ENCODE measurements at regions of chr4 and their contacts with region 1.

Region 1: GRCh38 chr4:5050520-5051277 is 581 bp upstream of the STK32B start:
- DNase-seq: peak in 2 of 9 experiments; percentile 13 to 38
- ATAC-seq: no peak
- H3K4me3 ChIP-seq: peak overlapping the region; percentile 39 to 48
- H3K4me3 Mint-ChIP-seq: peak overlapping the region; percentile 79
- H3K27ac ChIP-seq: no peak overlapping the region
- H3K27ac Mint-ChIP-seq: no peak overlapping the region
- H3K4me1 ChIP-seq: peaks cover 9% of the 10 kb centered on the region
- H3K4me1 Mint-ChIP-seq: peaks cover 17% of the 10 kb centered on the region
- H3K27me3 ChIP-seq: peaks cover 0 to 10% of the 10 kb centered on the region in 2 experiments
- H3K27me3 Mint-ChIP-seq: peaks cover 52% of the 10 kb centered on the region
- CTCF ChIP-seq: no peak

Region 2: DNA sequence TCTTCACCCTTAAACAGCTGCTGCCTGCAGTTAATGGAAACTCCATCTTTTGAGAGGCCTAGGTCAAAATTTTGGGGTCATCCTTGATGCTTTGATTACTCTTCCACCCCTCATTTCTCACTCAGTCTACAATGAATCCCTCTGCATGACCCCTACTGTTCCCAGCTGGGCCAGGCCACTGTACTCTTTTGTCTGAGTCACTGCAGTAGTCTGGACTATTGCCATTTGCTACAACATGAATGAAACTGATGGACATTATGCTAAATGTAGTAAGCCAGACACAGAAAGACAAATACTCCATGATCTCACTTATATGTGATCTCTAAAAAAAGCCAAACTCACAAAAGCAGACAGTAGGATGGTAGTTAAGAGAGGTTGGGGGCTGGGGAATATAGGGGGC is 28.9 kb after region 1 on chr4:
- CTCF ChIA-PET with region 1: no interaction called
- POLR2A ChIA-PET with region 1: no interaction called
- intact Hi-C with region 1: no loop called
- DNase-seq: no peak
- ATAC-seq: no peak
- H3K4me3 ChIP-seq: no peak overlapping the region
- H3K4me3 Mint-ChIP-seq: no peak overlapping the region
- H3K27ac ChIP-seq: no peak overlapping the region
- H3K27ac Mint-ChIP-seq: no peak overlapping the region
- H3K4me1 ChIP-seq: no peaks in the 10 kb centered on the region
- H3K4me1 Mint-ChIP-seq: no peaks in the 10 kb centered on the region
- H3K27me3 ChIP-seq: no peaks in the 10 kb centered on the region
- H3K27me3 Mint-ChIP-seq: peaks cover 5% of the 10 kb centered on the region
- CTCF ChIP-seq: no peak

Region 3: DNA sequence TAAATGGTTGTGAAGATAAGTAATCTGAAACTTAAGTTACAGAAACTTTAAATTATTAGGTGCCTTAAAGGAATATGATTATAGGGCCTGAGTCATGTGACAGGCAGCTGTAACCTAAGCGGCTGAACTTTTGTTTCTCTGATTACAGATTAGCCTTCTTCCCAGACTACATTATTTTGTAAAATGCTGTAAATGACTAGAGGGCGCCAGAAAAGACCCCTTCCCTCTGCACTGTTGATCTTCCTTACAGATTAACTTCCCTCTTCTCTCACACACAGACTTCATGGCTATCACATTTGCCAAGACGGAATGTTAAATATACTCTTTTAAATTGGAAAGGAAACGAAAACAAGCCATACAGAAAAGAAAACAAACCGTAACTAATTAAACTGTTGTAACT is 561.1 kb after region 1 on chr4:
- CTCF ChIA-PET with region 1: no interaction called
- POLR2A ChIA-PET with region 1: no interaction called
- intact Hi-C with region 1: no loop called
- DNase-seq: no peak
- ATAC-seq: no peak
- H3K4me3 ChIP-seq: no peak overlapping the region
- H3K4me3 Mint-ChIP-seq: no peak overlapping the region
- H3K27ac ChIP-seq: no peak overlapping the region
- H3K27ac Mint-ChIP-seq: no peak overlapping the region
- H3K4me1 ChIP-seq: no peaks in the 10 kb centered on the region
- H3K4me1 Mint-ChIP-seq: no peaks in the 10 kb centered on the region
- H3K27me3 ChIP-seq: no peaks in the 10 kb centered on the region
- H3K27me3 Mint-ChIP-seq: no peaks in the 10 kb centered on the region
- CTCF ChIP-seq: no peak

Region 4: DNA sequence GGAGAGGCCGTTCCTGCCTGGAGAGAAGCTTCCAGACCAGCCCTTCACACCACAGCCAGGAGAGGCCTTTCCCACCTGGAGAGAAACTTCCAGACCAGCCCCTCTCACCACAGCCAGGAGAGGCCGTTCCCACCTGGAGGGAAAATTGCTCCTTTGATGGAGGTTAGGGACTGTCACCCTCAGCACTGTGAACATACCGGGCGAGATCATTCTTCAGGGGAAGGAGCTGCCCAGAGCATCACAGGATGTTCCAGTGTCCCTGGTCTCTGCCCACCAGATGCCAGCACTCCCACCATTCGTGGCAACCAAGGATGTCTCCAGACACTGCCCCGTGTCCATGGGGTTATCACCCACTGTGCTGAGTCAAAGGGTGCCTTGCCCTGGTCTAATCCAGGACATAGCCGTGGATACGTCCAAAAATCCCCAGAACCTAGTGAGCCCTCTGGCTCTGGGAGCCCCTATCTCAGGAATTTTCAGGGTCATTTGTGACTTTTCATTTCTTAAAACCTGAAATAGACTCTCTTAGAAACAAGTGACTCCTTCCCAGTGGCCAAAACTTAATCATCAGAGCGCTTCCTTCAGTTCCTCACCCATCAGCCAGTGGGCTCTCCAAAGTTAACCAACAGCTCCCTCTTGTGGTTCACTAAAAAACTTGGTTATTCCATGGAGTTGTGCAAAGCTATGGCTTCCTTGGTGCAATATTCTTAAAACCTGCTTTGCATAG is 762.0 kb after region 1 on chr4:
- CTCF ChIA-PET with region 1: no interaction called
- POLR2A ChIA-PET with region 1: no interaction called
- intact Hi-C with region 1: loop called in 1 of 2 experiments (anchors 2 kb)
- DNase-seq: peak in 2 of 9 experiments; percentile 35 to 55
- ATAC-seq: no peak
- H3K4me3 ChIP-seq: no peak overlapping the region
- H3K4me3 Mint-ChIP-seq: no peak overlapping the region
- H3K27ac ChIP-seq: no peak overlapping the region
- H3K27ac Mint-ChIP-seq: no peak overlapping the region
- H3K4me1 ChIP-seq: no peaks in the 10 kb centered on the region
- H3K4me1 Mint-ChIP-seq: no peaks in the 10 kb centered on the region
- H3K27me3 ChIP-seq: no peaks in the 10 kb centered on the region
- H3K27me3 Mint-ChIP-seq: no peaks in the 10 kb centered on the region
- CTCF ChIP-seq: no peak